ENCODE measurements at regions of chr7 and their contacts with region 1.

Region 1: GRCh38 chr7:12423355-12423994 is 19.8 kb upstream of the VWDE start:
- DNase-seq: no peak
- H3K4me3 ChIP-seq: peak overlapping the region in 1 of 4 experiments; percentile 50; a peak in 3 of 8 replicates
- H3K27ac ChIP-seq: peak overlapping the region; percentile 74
- H3K4me1 ChIP-seq: peaks cover 0 to 15% (median 10%) of the 10 kb centered on the region in 4 experiments; a peak in 4 of 7 replicates
- H3K27me3 ChIP-seq: no peaks in the 10 kb centered on the region
- CTCF ChIP-seq: no peak
- EP300 ChIP-seq: no peak
- POLR2A ChIP-seq: no peak
- RAD21 ChIP-seq: no peak

Region 2: DNA sequence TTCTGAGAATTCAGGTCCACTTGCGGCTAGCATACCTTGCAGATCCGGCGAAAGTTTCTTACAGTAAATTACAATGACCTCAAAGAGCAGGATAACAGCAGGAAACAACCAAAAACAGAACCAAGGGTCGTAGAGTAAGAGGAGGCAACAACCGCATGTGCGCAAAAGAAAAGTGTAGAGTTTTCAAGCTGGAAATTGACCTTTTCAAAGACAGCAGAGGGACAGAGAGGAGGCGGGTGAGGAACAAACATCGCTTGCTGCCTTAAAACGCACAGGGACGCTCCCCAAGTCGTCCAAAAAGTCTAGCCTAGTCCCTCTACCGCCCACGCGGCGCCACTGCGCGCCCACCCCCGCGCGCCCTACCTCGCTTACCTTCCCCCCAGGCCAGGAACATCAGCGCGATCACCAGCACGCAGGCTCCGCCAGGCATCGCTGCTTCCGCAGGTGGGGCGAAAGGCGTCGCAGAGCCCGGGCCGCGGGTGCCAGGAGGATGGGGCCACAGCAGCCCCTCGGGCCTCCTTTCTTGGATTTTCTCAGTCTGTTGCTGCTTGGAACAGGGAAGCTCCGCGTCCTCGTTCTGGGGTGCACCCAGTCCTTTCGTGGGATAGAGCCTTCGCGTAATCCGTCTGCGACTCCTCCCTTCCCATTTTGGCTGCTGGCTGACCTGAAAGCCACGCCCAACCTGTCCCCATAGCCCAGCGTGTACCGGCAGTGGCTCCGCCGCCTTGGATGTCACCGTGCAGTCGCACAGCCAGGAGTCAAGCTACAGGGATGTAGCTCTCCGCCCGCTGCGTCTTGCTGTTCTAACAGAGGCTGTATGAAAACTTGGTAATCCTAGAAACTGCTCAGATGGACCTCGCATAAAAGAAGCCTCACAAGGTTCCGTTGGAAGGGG is 19.9 kb before region 1 on chr7 and contains the start of gene VWDE:
- CTCF ChIA-PET with region 1: interaction called, 3 read pairs
- POLR2A ChIA-PET with region 1: interaction called, 20 read pairs
- DNase-seq: peak in 1 of 2 experiments; percentile 81
- H3K4me3 ChIP-seq: peak within 1 kb of the TSS; percentile 89 to 97 (median 90)
- H3K27ac ChIP-seq: peak within 1 kb of the TSS; percentile 67
- H3K4me1 ChIP-seq: peaks cover 0 to 4% (median 2%) of the 10 kb centered on the region in 4 experiments; a peak in 3 of 7 replicates
- H3K27me3 ChIP-seq: no peaks in the 10 kb centered on the region
- CTCF ChIP-seq: peak in 1 of 3 experiments; percentile 1; a peak in 1 of 4 replicates
- EP300 ChIP-seq: no peak
- POLR2A ChIP-seq: peak in 1 of 2 experiments; percentile 82; a peak in 2 of 3 replicates
- RAD21 ChIP-seq: no peak
- total RNA-seq, gene VWDE: 18.9 and 21.2 TPM in 2 replicates

Region 3: DNA sequence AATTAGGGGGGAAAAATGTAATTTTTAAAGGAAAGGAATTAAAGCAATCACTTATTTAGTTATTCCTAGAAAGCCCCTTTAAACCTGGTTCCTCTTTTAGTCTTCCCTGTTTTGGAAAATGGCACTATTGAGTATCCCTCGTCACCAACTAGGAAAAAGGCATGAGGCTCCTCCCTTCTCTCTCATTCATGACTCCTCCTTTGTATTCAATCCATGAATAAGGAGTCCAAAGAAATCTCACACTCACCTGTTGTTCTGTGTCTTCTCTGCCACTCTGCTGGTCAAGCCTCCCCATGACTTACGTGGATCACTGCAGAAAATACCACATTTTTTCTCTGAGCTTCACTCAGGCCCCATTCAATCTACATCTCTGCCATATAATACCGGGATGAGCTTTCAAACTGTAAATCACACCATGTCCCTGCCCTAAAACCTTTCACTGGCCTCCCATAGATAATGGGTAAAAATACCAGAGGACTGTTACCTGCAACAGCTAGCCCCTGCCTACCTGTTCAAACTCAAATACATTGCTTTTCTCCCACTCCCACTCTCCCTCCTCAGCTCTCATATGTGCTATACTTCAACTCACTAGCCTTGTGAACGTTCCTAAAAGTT is 14.3 kb before region 1 on chr7:
- CTCF ChIA-PET with region 1: interaction called, 3 read pairs
- POLR2A ChIA-PET with region 1: interaction called, 20 read pairs
- DNase-seq: no peak
- H3K4me3 ChIP-seq: no peak overlapping the region
- H3K27ac ChIP-seq: no peak overlapping the region
- H3K4me1 ChIP-seq: peaks cover 0 to 7% (median 0%) of the 10 kb centered on the region in 4 experiments; a peak in 3 of 7 replicates
- H3K27me3 ChIP-seq: no peaks in the 10 kb centered on the region
- CTCF ChIP-seq: no peak
- EP300 ChIP-seq: no peak
- POLR2A ChIP-seq: no peak
- RAD21 ChIP-seq: no peak

Region 4: DNA sequence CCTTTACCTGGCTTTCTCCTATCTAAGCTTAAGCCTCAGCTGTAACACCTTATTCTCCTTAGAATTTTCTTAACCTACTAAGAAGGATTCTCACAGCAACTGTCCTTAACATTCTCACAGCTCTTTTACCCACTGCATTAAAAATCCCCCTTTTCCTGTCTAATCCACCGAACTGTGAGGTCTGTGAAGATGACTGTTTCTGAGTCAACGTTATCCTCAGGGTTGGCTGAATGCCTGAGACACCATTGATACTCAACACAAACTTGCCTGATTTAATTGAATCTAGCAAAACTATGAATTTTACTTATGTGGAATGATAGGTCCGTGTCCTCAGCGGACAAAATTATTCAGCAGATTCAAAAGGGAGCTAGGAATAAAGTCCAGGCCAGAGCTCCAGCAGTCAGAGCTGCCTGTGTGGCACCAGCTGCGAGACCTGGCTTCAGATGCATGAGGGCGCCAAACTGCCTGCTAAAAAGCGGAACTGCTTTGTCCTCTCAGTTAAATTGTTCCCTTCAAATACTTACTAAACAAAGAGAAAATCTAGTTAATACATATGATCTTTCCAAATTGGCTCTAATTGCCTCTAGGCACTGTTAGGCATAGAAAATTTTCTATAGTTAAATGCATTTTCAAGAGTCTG is 13.5 kb after region 1 on chr7:
- CTCF ChIA-PET with region 1: interaction called, 15 read pairs
- POLR2A ChIA-PET with region 1: interaction called, 10 read pairs
- DNase-seq: no peak
- H3K4me3 ChIP-seq: no peak overlapping the region
- H3K27ac ChIP-seq: no peak overlapping the region
- H3K4me1 ChIP-seq: peaks cover 0 to 3% (median 0%) of the 10 kb centered on the region in 4 experiments; a peak in 2 of 7 replicates
- H3K27me3 ChIP-seq: no peaks in the 10 kb centered on the region
- CTCF ChIP-seq: peak; percentile 55 to 71 (median 60)
- EP300 ChIP-seq: no peak
- POLR2A ChIP-seq: no peak
- RAD21 ChIP-seq: peak; percentile 59 to 70

Measured in H1 (cell line).